ENCODE measurements at regions of chr2 and their contacts with region 1.

Region 1: DNA sequence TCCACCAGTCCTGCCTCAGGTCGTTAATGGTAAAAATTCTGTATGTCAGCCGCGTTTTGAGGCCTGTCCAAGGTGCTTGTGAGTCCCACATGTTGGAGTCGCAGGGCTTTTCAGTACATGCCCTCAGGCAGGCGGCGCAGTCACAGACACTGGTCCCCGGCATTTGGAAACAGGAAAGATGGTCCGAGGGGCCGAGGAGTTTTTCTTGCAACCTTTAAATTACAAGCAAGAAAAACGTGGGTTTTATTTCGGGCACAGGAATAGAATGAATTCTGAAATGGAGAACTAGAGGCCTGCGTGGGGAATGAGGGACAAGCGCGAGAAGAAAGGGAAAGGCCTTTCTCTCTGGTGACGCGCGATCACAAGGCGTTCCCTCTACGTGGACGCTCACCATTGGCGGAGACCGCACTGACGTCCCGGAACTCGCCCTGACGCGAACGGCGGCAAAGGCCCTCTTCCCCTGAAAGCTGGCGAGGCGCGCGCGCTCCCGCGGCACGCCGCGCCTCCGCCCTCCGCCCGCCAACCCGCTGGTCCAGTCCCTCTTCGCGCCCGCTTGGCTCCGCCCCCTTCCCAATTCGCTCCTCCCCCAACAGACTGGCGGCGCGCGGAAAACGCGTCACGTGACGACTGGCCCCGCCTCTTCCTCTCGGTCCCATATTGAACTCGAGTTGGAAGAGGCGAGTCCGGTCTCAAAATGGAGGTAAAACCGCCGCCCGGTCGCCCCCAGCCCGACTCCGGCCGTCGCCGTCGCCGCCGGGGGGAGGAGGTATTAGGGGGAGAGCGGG is at the start of gene HNRNPA3:
- DNase-seq: peak; percentile 100
- total RNA-seq, gene HNRNPA3: 95.7 TPM

Region 2: GRCh38 chr2:176544991-176545956 is 667.0 kb before region 1 on chr2:
- intact Hi-C with region 1: no loop called
- DNase-seq: no peak

Region 3: DNA sequence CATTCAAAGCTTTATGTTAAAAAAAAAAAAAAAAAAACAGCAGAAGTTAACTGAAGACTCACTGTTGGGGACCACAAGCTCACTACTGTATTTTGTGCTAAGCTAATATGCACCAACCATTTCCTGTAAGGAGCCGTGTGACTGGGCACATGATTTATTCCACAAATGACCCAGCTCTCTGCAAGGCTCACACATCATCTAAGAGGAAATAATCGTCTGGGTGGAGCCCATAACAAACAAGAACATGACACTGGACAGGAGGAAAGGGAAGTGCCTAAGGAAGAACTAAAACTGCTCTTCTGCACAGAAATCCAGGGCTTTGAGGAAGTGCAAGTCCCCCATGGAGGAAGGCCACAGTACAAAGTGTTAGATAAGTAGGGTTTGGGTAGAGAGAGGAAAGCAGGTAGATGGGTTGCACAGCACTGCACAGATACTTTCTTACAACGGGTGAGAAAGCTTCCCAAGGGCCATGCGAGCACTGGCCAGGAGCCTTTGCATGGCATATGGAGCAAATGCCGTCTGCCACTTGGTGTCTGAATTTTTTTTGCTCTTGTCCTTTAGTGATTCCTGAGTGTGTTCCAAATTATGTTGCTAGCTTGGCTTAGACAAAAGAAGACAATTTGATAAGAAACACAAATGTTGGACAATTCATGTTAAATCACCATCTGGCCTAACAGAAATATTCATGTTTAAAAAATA is 27.8 kb after region 1 on chr2:
- intact Hi-C with region 1: loop called (anchors 2 kb)
- DNase-seq: no peak

Measured in cardiac septum (tissue), 1 donor.